ENCODE measurements at regions of chr17 and their contacts with region 1.

Region 1: GRCh38 chr17:82297714-82298537 is 19.5 kb downstream of the CD7 start:
- DNase-seq: peak; percentile 68 to 99 (median 96)
- ATAC-seq: peak; percentile 86
- H3K4me3 ChIP-seq: peak overlapping the region; percentile 57
- H3K4me3 Mint-ChIP-seq: peak overlapping the region; percentile 92 to 99 (median 98)
- H3K27ac ChIP-seq: peak overlapping the region; percentile 98
- H3K27ac Mint-ChIP-seq: peak overlapping the region; percentile 100
- H3K4me1 ChIP-seq: peaks cover 61 to 65% of the 10 kb centered on the region in 2 donors
- H3K4me1 Mint-ChIP-seq: peaks cover 23 to 89% (median 76%) of the 10 kb centered on the region in 7 donors
- H3K27me3 ChIP-seq: no peaks in the 10 kb centered on the region
- H3K27me3 Mint-ChIP-seq: peaks cover 0 to 3% (median 0%) of the 10 kb centered on the region in 5 donors

Region 2: DNA sequence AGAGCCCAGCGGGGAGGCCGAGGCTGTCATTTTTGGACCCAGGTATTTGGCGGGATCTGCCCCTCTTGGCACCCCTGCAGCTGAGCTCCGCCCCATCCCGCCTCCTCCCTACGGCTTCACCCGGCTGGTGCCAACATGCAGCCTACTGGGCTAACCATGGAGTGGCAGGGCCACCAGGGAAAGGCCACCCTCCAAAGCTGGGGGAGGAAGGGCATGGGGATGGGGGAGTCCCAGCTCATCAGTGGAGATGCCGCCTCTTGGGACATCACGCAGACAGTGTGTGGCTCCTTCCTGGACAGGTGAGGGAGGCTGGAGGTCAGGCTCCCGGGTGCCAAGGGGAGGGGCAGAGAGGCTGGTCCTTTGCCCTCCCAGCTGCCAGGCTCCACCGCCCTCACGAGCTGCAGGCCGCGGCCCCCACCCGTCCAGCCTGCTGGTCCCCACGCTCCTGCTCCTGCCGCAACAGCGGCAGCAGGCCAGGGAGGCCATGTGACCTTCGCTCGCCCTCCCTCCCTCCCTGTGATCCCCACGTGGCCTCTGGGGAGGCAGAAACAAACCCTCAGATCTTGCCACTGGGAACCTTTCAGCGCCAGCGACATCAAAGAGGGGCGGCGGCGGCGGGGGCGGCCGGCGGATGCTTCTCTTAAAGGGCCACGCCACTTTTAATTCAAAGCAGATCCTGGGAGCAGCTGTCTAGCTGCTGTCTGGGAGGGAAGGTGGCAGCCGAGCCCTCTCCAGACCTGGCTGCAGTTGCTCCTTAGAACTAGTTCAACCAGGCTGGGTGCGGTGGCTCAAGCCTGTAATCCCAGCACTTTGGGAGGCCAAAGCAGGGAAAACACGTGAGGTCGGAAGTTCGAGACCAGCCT is 330.2 kb before region 1 on chr17:
- CTCF ChIA-PET with region 1: interaction called, 3 read pairs
- POLR2A ChIA-PET with region 1: interaction called, 10 read pairs
- intact Hi-C with region 1: no loop called
- DNase-seq: peak; percentile 62 to 90 (median 89)
- ATAC-seq: peak; percentile 97
- H3K4me3 ChIP-seq: peak overlapping the region; percentile 43
- H3K4me3 Mint-ChIP-seq: peak overlapping the region; percentile 60 to 84 (median 76)
- H3K27ac ChIP-seq: peak overlapping the region; percentile 58
- H3K27ac Mint-ChIP-seq: peak overlapping the region; percentile 68 to 93 (median 84)
- H3K4me1 ChIP-seq: peaks cover 23% of the 10 kb centered on the region in 2 donors
- H3K4me1 Mint-ChIP-seq: peaks cover 4 to 40% (median 20%) of the 10 kb centered on the region in 7 donors
- H3K27me3 ChIP-seq: peaks cover 0 to 2% of the 10 kb centered on the region in 2 donors
- H3K27me3 Mint-ChIP-seq: peaks cover 0 to 25% (median 0%) of the 10 kb centered on the region in 5 donors

Region 3: DNA sequence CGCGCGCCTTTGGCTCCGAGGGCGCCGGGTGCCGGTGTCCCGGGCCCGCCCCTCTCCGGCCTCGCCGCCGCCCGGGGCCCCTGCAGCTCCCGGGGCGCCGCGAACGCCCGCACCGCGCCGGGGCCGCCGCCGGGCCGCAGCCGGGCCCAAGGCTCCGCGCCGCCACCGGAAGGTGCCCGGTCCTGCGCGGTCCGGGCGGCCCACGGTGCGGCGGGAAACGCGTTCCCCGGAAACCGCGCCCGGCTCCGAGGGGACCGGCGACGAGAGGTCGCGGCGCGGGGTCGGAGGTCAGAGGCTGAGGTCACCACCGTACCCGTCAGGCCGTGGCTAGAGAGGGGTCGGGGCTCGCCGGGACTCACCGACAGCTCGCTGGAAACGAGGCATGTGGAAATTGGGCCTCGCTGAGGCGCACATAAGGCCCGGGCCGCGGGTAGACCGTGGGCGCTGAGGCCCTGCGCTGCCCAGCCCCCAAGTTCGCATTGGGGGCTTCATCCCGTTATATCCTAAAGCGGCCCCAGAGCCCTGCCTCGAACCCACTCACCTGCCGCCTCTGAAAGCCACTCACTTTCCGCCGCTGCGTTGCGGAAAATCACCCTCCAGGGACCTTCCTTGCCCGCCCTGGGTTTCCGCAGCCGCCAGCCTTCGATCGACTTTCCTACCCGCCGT is 232.2 kb before region 1 on chr17 and contains the start of gene DUS1L:
- CTCF ChIA-PET with region 1: no interaction called
- POLR2A ChIA-PET with region 1: no interaction called
- intact Hi-C with region 1: no loop called
- DNase-seq: peak; percentile 55 to 87 (median 71)
- ATAC-seq: peak; percentile 95
- H3K4me3 ChIP-seq: peak within 1 kb of the TSS; percentile 66
- H3K4me3 Mint-ChIP-seq: peak within 1 kb of the TSS; percentile 73 to 91 (median 82)
- H3K27ac ChIP-seq: peak within 1 kb of the TSS; percentile 86
- H3K27ac Mint-ChIP-seq: peak within 1 kb of the TSS; percentile 86 to 95 (median 93)
- H3K4me1 ChIP-seq: peaks cover 8 to 27% of the 10 kb centered on the region in 2 donors
- H3K4me1 Mint-ChIP-seq: peaks cover 0 to 18% (median 10%) of the 10 kb centered on the region in 7 donors
- H3K27me3 ChIP-seq: no peaks in the 10 kb centered on the region
- H3K27me3 Mint-ChIP-seq: no peaks in the 10 kb centered on the region
- total RNA-seq, gene DUS1L: 127 to 157 (median 147) TPM

Region 4: GRCh38 chr17:82112914-82113311 is 185.0 kb before region 1 on chr17:
- CTCF ChIA-PET with region 1: no interaction called
- POLR2A ChIA-PET with region 1: no interaction called
- intact Hi-C with region 1: no loop called
- DNase-seq: no peak
- ATAC-seq: no peak
- H3K4me3 ChIP-seq: no peak overlapping the region
- H3K4me3 Mint-ChIP-seq: no peak overlapping the region
- H3K27ac ChIP-seq: no peak overlapping the region
- H3K27ac Mint-ChIP-seq: peak overlapping the region in 1 of 9 donors; percentile 12
- H3K4me1 ChIP-seq: no peaks in the 10 kb centered on the region
- H3K4me1 Mint-ChIP-seq: peaks cover 0 to 18% (median 13%) of the 10 kb centered on the region in 7 donors
- H3K27me3 ChIP-seq: no peaks in the 10 kb centered on the region
- H3K27me3 Mint-ChIP-seq: no peaks in the 10 kb centered on the region

Region 5: DNA sequence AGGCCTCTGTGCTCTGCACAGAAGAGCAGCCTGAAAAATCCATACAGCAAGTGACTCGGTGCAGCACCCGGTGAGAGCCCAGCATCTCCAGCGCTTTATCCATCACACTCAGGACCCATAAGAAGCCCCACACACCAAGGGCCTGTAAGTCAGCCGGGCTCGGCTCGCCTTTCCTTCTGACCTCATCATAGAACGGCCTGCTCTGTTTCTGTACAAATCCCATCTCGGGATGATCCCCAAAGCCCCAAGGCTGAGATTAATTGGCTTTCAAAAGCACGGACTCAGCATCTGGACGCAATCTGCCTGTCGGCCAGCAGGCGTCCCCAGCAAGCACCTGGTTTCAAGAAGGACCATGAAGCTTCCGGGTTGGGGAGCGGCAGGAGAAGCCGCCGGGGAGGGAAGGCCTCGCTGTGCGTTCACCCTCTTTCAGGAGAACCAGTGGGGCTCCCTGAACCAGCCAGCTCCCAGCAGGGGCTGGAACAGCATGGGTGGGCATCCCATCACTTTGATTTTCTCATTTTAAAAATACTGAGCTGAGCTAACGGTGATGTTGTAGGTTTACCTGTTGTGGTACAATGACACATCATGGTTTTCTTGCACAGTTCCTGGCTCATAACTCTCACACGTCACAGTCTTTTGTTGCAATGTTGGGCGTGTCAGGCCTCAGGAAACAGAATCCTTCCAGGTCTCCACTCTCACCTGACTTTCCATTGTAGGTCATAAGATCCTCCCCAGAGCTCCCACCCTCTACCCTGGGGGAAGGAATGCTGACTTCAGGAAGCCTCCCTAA is 92.0 kb before region 1 on chr17:
- CTCF ChIA-PET with region 1: interaction called, 5 read pairs
- POLR2A ChIA-PET with region 1: interaction called, 24 read pairs
- intact Hi-C with region 1: no loop called
- DNase-seq: peak; percentile 67 to 87 (median 82)
- ATAC-seq: peak; percentile 88
- H3K4me3 ChIP-seq: no peak overlapping the region
- H3K4me3 Mint-ChIP-seq: peak overlapping the region in 9 of 10 donors; percentile 45 to 71 (median 58)
- H3K27ac ChIP-seq: peak overlapping the region; percentile 64
- H3K27ac Mint-ChIP-seq: peak overlapping the region; percentile 87 to 98 (median 95)
- H3K4me1 ChIP-seq: peaks cover 14 to 22% of the 10 kb centered on the region in 2 donors
- H3K4me1 Mint-ChIP-seq: peaks cover 24 to 61% (median 43%) of the 10 kb centered on the region in 7 donors
- H3K27me3 ChIP-seq: no peaks in the 10 kb centered on the region
- H3K27me3 Mint-ChIP-seq: no peaks in the 10 kb centered on the region

Region 6: GRCh38 chr17:82236142-82236981 is 61.6 kb before region 1 on chr17:
- CTCF ChIA-PET with region 1: interaction called, 30 read pairs
- POLR2A ChIA-PET with region 1: interaction called, 12 read pairs
- intact Hi-C with region 1: loop called (anchors 2 kb)
- DNase-seq: peak; percentile 58 to 77 (median 71)
- ATAC-seq: peak; percentile 66
- H3K4me3 ChIP-seq: no peak overlapping the region
- H3K4me3 Mint-ChIP-seq: peak overlapping the region in 1 of 10 donors; percentile 17
- H3K27ac ChIP-seq: peak overlapping the region; percentile 46
- H3K27ac Mint-ChIP-seq: peak overlapping the region in 5 of 9 donors; percentile 23 to 82 (median 51)
- H3K4me1 ChIP-seq: peaks cover 10 to 47% of the 10 kb centered on the region in 2 donors
- H3K4me1 Mint-ChIP-seq: peaks cover 5 to 47% (median 33%) of the 10 kb centered on the region in 7 donors
- H3K27me3 ChIP-seq: no peaks in the 10 kb centered on the region
- H3K27me3 Mint-ChIP-seq: no peaks in the 10 kb centered on the region

Region 7: GRCh38 chr17:82320956-82321927 is 23.3 kb after region 1 on chr17:
- CTCF ChIA-PET with region 1: interaction called, 61 read pairs
- POLR2A ChIA-PET with region 1: interaction called, 237 read pairs
- intact Hi-C with region 1: loop called (anchors 1 kb)
- DNase-seq: peak; percentile 70 to 95 (median 80)
- ATAC-seq: peak; percentile 69
- H3K4me3 ChIP-seq: peak overlapping the region; percentile 46
- H3K4me3 Mint-ChIP-seq: peak overlapping the region; percentile 58 to 87 (median 82)
- H3K27ac ChIP-seq: peak overlapping the region; percentile 77
- H3K27ac Mint-ChIP-seq: peak overlapping the region; percentile 75 to 97 (median 93)
- H3K4me1 ChIP-seq: peaks cover 13 to 20% of the 10 kb centered on the region in 2 donors
- H3K4me1 Mint-ChIP-seq: peaks cover 0 to 31% (median 16%) of the 10 kb centered on the region in 7 donors
- H3K27me3 ChIP-seq: no peaks in the 10 kb centered on the region
- H3K27me3 Mint-ChIP-seq: no peaks in the 10 kb centered on the region

Region 8: DNA sequence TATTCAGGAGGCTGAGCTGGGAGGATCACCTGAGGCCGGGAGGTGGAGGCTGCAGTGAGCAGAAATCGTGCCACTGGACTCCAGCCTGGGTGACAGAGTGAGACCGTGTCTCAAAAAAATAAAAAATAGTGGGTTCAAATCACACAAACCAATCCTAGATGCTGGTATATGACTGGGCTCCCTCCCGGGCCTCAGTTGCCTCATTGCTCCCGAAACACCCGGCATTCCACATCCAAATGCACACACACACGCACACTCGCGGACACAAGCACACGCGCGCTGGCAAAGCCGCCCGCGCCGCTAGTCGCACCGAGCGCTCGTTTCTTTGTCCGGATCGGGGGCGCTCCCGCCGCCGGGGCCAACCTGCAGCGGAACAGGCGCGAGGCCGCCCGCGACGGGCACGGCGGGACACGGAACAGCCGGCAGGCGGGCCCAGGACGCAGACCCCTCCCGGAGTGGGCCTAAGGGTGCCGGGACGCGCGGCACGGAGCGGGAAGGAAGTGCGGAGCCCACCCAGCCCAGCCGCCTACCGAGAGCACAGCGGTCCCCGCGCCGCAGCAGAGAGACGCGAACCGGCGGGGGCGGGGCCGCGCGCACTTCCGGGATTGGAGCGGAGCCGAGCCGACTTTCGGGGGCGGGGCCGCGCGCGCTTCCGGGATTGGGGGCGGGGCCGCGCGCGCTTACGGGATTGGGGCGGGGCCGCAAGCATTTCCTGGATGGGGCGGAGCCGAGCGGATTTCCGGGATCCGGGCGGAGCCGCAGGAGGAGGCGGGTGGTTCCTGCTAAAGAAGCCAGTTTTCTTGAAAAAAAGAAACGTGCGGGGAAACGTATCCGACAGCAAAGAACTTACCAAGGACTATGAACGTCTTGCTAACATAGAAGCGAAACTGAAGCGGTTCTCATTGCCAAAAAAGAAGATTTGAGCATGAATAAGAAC is 152.5 kb after region 1 on chr17 and contains the start of gene CYBC1:
- CTCF ChIA-PET with region 1: interaction called, 3 read pairs
- POLR2A ChIA-PET with region 1: interaction called, 7 read pairs
- intact Hi-C with region 1: loop called in 1 of 2 experiments (anchors 2 kb)
- DNase-seq: peak; percentile 88 to 97 (median 94)
- ATAC-seq: peak; percentile 91
- H3K4me3 ChIP-seq: peak within 1 kb of the TSS; percentile 92
- H3K4me3 Mint-ChIP-seq: peak within 1 kb of the TSS; percentile 93 to 99 (median 98)
- H3K27ac ChIP-seq: peak within 1 kb of the TSS; percentile 86
- H3K27ac Mint-ChIP-seq: peak within 1 kb of the TSS; percentile 92 to 99 (median 97)
- H3K4me1 ChIP-seq: peaks cover 14 to 22% of the 10 kb centered on the region in 2 donors
- H3K4me1 Mint-ChIP-seq: peaks cover 22 to 49% (median 33%) of the 10 kb centered on the region in 7 donors
- H3K27me3 ChIP-seq: no peaks in the 10 kb centered on the region
- H3K27me3 Mint-ChIP-seq: no peaks in the 10 kb centered on the region
- total RNA-seq, gene CYBC1: 112 to 385 (median 199) TPM

Measured in naive thymus-derived CD4-positive, alpha-beta T cell (primary cell).